ENCODE measurements at regions of chr15 and their contacts with region 1.

Region 1: DNA sequence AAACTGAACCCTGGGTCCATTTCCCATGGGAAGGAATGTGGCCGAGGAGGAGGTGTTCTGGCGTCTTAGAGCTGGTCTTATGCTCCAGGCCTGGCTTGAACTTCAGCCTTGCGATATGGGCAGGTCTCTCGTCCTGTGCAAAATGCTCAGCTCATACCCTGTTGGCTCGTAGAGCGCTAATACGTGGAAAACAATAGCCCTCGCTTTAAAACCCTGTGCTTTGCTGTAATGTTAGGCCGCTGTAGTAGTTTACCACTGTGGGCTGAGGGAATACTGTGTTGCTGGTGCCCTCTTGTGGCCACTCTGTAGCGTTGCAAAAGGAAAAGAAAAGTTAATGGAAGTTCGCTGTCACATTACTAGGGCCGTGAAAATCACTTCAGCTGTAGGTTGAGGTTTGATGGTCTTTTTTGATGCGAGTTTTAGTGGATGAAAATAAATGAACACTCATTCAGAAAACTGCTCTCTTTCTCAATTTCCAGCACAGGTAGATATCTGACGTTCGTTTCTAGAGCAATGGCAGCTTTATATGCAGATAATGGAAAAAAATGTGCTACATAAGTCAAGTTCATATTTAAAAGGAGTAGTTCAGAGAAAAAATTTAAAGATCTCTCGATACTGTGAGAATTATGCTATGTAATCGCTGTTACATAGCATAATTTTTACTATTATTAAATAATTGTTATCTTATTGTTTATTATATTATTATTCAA is 92.9 kb downstream of the MCTP2 start:
- DNase-seq: peak; percentile 65 to 85
- ATAC-seq: peak; percentile 71 to 97 (median 73)
- H3K4me3 ChIP-seq: no peak overlapping the region
- H3K4me3 Mint-ChIP-seq: peak overlapping the region; percentile 72
- H3K27ac ChIP-seq: peak overlapping the region; percentile 57
- H3K27ac Mint-ChIP-seq: peak overlapping the region; percentile 91 to 93
- H3K4me1 ChIP-seq: peaks cover 18% of the 10 kb centered on the region
- H3K4me1 Mint-ChIP-seq: peaks cover 54 to 68% of the 10 kb centered on the region in 2 donors
- H3K27me3 ChIP-seq: no peaks in the 10 kb centered on the region
- H3K27me3 Mint-ChIP-seq: no peaks in the 10 kb centered on the region
- CTCF ChIP-seq: peak; percentile 87

Region 2: GRCh38 chr15:93997084-93997918 is 327.0 kb before region 1 on chr15:
- intact Hi-C with region 1: loop called (anchors 10 kb)
- DNase-seq: peak in 1 of 2 donors; percentile 20
- ATAC-seq: no peak
- H3K4me3 ChIP-seq: no peak overlapping the region
- H3K4me3 Mint-ChIP-seq: no peak overlapping the region
- H3K27ac ChIP-seq: no peak overlapping the region
- H3K27ac Mint-ChIP-seq: no peak overlapping the region
- H3K4me1 ChIP-seq: no peaks in the 10 kb centered on the region
- H3K4me1 Mint-ChIP-seq: no peaks in the 10 kb centered on the region
- H3K27me3 ChIP-seq: no peaks in the 10 kb centered on the region
- H3K27me3 Mint-ChIP-seq: no peaks in the 10 kb centered on the region
- CTCF ChIP-seq: peak; percentile 90

Region 3: DNA sequence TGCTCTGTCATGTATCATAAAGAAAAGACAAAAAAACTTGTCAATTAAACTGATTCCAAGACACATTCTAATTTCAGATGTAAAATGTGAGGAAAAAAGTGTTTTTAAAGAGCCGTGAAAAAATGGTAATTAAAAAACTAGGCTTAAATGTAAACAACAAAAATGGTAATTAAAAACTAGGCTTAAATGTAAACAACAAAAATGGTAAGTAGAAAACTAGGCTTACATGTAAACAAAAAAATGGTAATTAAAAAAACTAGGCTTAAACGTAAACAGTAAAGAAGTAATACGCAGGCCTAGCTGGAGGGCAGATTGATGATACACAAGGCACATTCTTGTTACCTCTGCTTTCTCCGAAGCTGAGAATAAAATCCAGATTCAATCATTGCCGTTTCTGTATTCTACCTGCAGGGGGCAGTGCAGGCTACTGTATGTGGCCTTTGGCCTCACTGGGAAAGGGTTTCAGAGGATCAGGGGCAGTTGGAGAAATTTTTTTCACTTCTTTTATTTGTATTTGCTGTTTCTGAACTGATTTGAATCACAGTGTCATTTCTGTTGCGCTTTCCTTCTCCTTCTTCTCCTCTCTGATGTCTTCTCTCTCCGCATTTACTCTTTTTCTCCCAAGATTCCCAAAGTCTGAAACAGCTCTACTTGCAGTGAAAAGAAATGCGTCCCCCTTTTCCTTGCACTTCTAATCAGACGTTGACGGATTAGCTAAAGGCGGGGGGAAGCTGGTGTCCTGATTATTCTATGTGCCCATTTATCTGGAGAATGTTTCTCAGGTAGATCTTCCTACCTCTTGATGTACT is 160.1 kb before region 1 on chr15:
- intact Hi-C with region 1: loop called (anchors 1 kb)
- DNase-seq: peak; percentile 57 to 77
- ATAC-seq: peak; percentile 71 to 89 (median 76)
- H3K4me3 ChIP-seq: no peak overlapping the region
- H3K4me3 Mint-ChIP-seq: peak overlapping the region; percentile 4
- H3K27ac ChIP-seq: no peak overlapping the region
- H3K27ac Mint-ChIP-seq: no peak overlapping the region
- H3K4me1 ChIP-seq: no peaks in the 10 kb centered on the region
- H3K4me1 Mint-ChIP-seq: peaks cover 13 to 14% of the 10 kb centered on the region in 2 donors
- H3K27me3 ChIP-seq: no peaks in the 10 kb centered on the region
- H3K27me3 Mint-ChIP-seq: no peaks in the 10 kb centered on the region
- CTCF ChIP-seq: peak; percentile 99

Region 4: GRCh38 chr15:94272251-94272898 is 51.9 kb before region 1 on chr15:
- intact Hi-C with region 1: loop called (anchors 2 kb)
- DNase-seq: peak in 1 of 2 donors; percentile 62
- ATAC-seq: peak; percentile 74 to 88 (median 86)
- H3K4me3 ChIP-seq: no peak overlapping the region
- H3K4me3 Mint-ChIP-seq: no peak overlapping the region
- H3K27ac ChIP-seq: peak overlapping the region; percentile 93
- H3K27ac Mint-ChIP-seq: no peak overlapping the region
- H3K4me1 ChIP-seq: peaks cover 41% of the 10 kb centered on the region
- H3K4me1 Mint-ChIP-seq: peaks cover 14 to 23% of the 10 kb centered on the region in 2 donors
- H3K27me3 ChIP-seq: no peaks in the 10 kb centered on the region
- H3K27me3 Mint-ChIP-seq: no peaks in the 10 kb centered on the region
- CTCF ChIP-seq: no peak

Region 5: GRCh38 chr15:94287794-94288246 is 36.5 kb before region 1 on chr15:
- intact Hi-C with region 1: loop called (anchors 2 kb)
- DNase-seq: peak; percentile 68 to 78
- ATAC-seq: peak; percentile 91 to 99 (median 96)
- H3K4me3 ChIP-seq: peak overlapping the region; percentile 22
- H3K4me3 Mint-ChIP-seq: peak overlapping the region; percentile 88
- H3K27ac ChIP-seq: peak overlapping the region; percentile 93
- H3K27ac Mint-ChIP-seq: peak overlapping the region in 1 of 2 donors; percentile 93
- H3K4me1 ChIP-seq: peaks cover 33% of the 10 kb centered on the region
- H3K4me1 Mint-ChIP-seq: peaks cover 88 to 92% of the 10 kb centered on the region in 2 donors
- H3K27me3 ChIP-seq: no peaks in the 10 kb centered on the region
- H3K27me3 Mint-ChIP-seq: no peaks in the 10 kb centered on the region
- CTCF ChIP-seq: no peak

Region 6: DNA sequence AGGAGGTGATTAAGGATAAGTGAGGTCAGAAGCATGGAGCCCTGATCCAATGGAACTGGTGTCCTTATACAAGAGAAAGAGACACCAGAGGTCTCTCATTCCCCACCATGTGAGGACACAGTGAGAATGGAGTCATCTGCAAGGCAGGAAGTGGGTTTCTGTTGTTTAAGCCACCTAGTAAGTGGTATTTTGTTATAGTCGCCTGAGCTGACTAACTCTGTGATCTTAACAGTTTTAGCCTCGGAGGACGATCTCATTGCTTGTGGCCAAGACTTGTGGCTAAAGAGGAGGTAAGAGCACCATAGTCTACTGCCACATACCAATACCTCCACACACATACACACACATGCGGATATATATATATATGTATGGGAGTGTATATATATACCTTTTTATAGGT is 19.1 kb before region 1 on chr15:
- intact Hi-C with region 1: loop called (anchors 1 kb)
- DNase-seq: peak; percentile 48 to 64
- ATAC-seq: peak; percentile 70 to 84 (median 80)
- H3K4me3 ChIP-seq: no peak overlapping the region
- H3K4me3 Mint-ChIP-seq: peak overlapping the region; percentile 83
- H3K27ac ChIP-seq: peak overlapping the region; percentile 84
- H3K27ac Mint-ChIP-seq: peak overlapping the region in 1 of 2 donors; percentile 93
- H3K4me1 ChIP-seq: peaks cover 60% of the 10 kb centered on the region
- H3K4me1 Mint-ChIP-seq: peaks cover 90 to 94% of the 10 kb centered on the region in 2 donors
- H3K27me3 ChIP-seq: no peaks in the 10 kb centered on the region
- H3K27me3 Mint-ChIP-seq: no peaks in the 10 kb centered on the region
- CTCF ChIP-seq: no peak

Region 7: DNA sequence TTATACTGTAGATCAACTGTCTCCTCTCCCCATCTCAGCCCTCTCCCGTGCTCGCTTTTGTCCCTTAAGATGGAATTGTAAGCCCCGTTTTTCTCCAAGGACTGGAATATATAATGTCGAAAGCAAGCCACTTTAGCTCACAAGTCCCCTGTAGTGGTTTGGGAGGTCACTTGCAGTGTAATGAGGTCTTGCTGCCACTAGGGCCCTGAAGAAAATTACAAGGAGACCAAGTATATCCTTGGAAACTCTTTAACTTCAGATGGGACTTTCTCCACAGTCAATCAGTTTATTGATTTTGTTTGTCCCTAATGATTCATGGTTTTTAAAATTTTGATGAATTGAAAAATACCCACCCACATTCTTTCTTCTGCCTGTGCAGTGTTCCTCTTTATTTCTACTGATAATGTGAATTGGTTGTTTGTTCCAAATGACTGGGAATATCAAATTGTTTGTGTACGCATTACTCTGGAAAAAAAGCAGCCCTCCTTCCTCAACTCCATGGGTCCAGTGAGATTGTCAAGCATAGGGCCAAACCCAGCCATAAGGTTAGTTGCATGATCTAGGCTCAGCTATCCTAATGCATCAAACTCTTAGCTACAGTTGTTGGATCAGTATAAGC is 201.9 kb after region 1 on chr15:
- intact Hi-C with region 1: no loop called
- DNase-seq: no peak
- ATAC-seq: no peak
- H3K4me3 ChIP-seq: no peak overlapping the region
- H3K4me3 Mint-ChIP-seq: no peak overlapping the region
- H3K27ac ChIP-seq: no peak overlapping the region
- H3K27ac Mint-ChIP-seq: no peak overlapping the region
- H3K4me1 ChIP-seq: no peaks in the 10 kb centered on the region
- H3K4me1 Mint-ChIP-seq: no peaks in the 10 kb centered on the region
- H3K27me3 ChIP-seq: no peaks in the 10 kb centered on the region
- H3K27me3 Mint-ChIP-seq: peaks cover 16 to 62% of the 10 kb centered on the region in 2 donors
- CTCF ChIP-seq: peak; percentile 22

Measured in natural killer cell (primary cell).